PC-9 (cell line): ENCODE measurements at regions of chr2 and their contacts with region 1.

Region 1: GRCh38 chr2:176398243-176399073 is 129.2 kb downstream of the MTX2 start:
- DNase-seq: peak in 1 of 2 experiments; percentile 18
- H3K4me3 ChIP-seq: no peak overlapping the region
- H3K27ac ChIP-seq: no peak overlapping the region
- H3K4me1 ChIP-seq: no peaks in the 10 kb centered on the region
- H3K27me3 ChIP-seq: no peaks in the 10 kb centered on the region
- CTCF ChIP-seq: no peak

Region 2: GRCh38 chr2:176432434-176432833 is 34.0 kb after region 1 on chr2:
- CTCF ChIA-PET with region 1: no interaction called
- POLR2A ChIA-PET with region 1: interaction called, 10 read pairs
- intact Hi-C with region 1: no loop called
- DNase-seq: no peak
- H3K4me3 ChIP-seq: no peak overlapping the region
- H3K27ac ChIP-seq: no peak overlapping the region
- H3K4me1 ChIP-seq: no peaks in the 10 kb centered on the region
- H3K27me3 ChIP-seq: no peaks in the 10 kb centered on the region
- CTCF ChIP-seq: no peak

Region 3: GRCh38 chr2:176445956-176446355 is 47.5 kb after region 1 on chr2:
- CTCF ChIA-PET with region 1: no interaction called
- POLR2A ChIA-PET with region 1: no interaction called
- intact Hi-C with region 1: no loop called
- DNase-seq: no peak
- H3K4me3 ChIP-seq: no peak overlapping the region
- H3K27ac ChIP-seq: no peak overlapping the region
- H3K4me1 ChIP-seq: no peaks in the 10 kb centered on the region
- H3K27me3 ChIP-seq: no peaks in the 10 kb centered on the region
- CTCF ChIP-seq: no peak

Region 4: DNA sequence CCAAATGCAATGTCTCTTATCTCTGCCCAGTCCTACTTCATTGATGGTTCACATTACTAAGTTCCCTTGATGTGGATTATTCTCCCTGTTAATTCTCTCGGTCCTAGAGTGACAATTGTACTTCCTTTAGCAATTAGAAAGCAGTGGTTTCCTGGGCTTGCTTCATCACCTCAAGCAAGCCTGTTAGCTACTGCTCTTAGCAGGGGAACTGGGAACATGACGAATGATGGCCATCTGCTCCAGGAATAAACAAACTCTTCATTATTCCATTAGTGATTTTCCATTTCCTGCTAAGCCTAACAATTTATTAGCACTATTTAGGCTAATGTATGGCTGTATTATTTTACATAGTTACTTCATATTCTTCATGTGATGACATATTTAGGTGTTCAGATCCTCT is 202.6 kb after region 1 on chr2:
- CTCF ChIA-PET with region 1: no interaction called
- POLR2A ChIA-PET with region 1: no interaction called
- intact Hi-C with region 1: no loop called
- DNase-seq: no peak
- H3K4me3 ChIP-seq: no peak overlapping the region
- H3K27ac ChIP-seq: no peak overlapping the region
- H3K4me1 ChIP-seq: no peaks in the 10 kb centered on the region
- H3K27me3 ChIP-seq: no peaks in the 10 kb centered on the region
- CTCF ChIP-seq: no peak